ENCODE measurements at regions of chr14 and their contacts with region 1.

Region 1: DNA sequence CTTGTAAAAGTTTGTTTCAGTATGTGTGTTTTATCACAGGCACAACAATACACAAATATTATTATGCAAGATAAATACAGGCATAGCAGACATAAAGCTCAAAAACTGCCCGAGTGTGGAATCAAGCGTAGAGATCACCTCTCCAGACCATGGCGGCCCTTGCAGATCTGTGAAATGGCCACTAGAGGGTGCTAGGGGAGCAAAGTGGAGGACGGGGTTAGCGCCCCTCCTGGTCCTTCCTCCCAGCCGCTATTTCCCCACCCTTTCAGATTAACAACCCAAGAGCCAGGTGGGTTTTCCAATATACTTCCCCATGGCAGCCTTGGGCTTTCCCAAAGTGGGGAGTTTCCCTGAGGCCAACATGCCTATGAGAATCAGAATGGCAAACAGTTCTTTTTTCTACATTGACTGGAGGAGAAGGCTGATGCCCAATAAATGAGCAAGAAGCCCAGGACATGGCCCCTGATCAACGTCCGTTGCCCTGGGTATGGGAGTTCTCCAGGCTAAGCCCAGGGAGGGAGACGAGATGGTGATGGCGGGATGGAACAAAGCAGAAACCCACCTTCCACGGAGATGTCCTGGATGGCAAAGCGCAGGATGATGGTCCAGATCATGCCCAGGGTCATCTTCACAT is 67.4 kb downstream of the ACTN1 start:
- DNase-seq: peak in 7 of 10 donors; percentile 35 to 71 (median 52)
- H3K4me3 ChIP-seq: no peak overlapping the region
- H3K27ac ChIP-seq: peak overlapping the region in 19 of 59 donors; percentile 4 to 52 (median 28)
- H3K27me3 ChIP-seq: no peaks in the 10 kb centered on the region
- CTCF ChIP-seq: peak; percentile 63 to 98 (median 92)

Region 2: DNA sequence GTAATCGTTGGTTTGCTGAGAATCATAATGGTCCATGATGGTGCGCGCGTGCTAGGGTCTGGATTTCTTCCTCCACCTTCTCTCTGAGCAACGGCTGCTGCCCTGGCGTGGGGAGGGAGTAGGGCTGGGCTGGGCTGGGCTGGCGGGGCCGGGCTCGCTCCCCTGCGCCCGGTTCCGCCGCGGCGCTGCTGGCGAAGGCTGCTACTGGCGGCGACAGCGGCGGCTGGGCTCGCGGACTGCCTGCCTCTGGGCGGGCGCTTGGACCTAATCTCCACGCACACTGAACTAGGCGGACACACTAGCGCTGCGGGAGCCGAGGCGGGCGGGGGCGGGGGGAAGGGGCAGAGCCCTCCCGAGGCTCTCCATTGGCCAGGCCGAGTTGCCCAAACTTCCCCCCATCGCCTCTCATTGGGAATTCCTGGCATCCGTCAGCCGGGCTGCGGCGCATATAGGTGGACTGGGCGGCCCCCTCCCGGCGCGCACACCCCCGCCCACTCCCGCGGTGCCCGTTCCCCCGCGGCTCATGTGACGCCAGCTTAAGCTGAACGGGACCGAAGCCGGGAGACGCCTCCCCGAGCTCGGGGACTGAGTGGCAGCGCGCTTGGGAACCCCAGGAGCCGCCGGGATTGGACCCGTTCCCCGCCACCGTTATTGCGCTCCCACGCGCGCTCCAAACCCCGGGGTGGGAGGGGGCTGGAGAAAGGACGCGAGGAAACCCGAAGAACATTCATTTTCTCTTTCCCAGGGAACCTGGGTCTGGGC is 67.5 kb after region 1 on chr14 and contains the start of gene ACTN1:
- intact Hi-C with region 1: loop called in 1 of 2 experiments (anchors 10 kb)
- DNase-seq: peak; percentile 53 to 92 (median 86)
- H3K4me3 ChIP-seq: peak within 1 kb of the TSS; percentile 41 to 94 (median 83)
- H3K27ac ChIP-seq: peak within 1 kb of the TSS in 58 of 59 donors; percentile 33 to 96 (median 86)
- H3K27me3 ChIP-seq: peaks cover 0 to 17% (median 0%) of the 10 kb centered on the region in 45 donors
- CTCF ChIP-seq: peak in 3 of 56 donors; percentile 5 to 26 (median 8)
- total RNA-seq, gene ACTN1: 56.9 to 234 (median 157) TPM

Region 3: GRCh38 chr14:69090187-69090789 is 178.6 kb after region 1 on chr14:
- intact Hi-C with region 1: loop called in 1 of 2 experiments (anchors 10 kb)
- DNase-seq: peak in 2 of 10 donors; percentile 10 to 44
- H3K4me3 ChIP-seq: no peak overlapping the region
- H3K27ac ChIP-seq: peak overlapping the region in 4 of 59 donors; percentile 2 to 24 (median 12)
- H3K27me3 ChIP-seq: no peaks in the 10 kb centered on the region
- CTCF ChIP-seq: peak; percentile 29 to 66 (median 51)

Region 4: GRCh38 chr14:69107407-69108003 is 195.8 kb after region 1 on chr14:
- intact Hi-C with region 1: loop called in 1 of 2 experiments (anchors 5 kb)
- DNase-seq: peak in 1 of 10 donors; percentile 36
- H3K4me3 ChIP-seq: no peak overlapping the region
- H3K27ac ChIP-seq: no peak overlapping the region
- H3K27me3 ChIP-seq: no peaks in the 10 kb centered on the region
- CTCF ChIP-seq: peak in 55 of 56 donors; percentile 28 to 78 (median 56)

Measured in dorsolateral prefrontal cortex (tissue), 120 donors.